ENCODE measurements at regions of chr7 and their contacts with region 1.

Region 1: DNA sequence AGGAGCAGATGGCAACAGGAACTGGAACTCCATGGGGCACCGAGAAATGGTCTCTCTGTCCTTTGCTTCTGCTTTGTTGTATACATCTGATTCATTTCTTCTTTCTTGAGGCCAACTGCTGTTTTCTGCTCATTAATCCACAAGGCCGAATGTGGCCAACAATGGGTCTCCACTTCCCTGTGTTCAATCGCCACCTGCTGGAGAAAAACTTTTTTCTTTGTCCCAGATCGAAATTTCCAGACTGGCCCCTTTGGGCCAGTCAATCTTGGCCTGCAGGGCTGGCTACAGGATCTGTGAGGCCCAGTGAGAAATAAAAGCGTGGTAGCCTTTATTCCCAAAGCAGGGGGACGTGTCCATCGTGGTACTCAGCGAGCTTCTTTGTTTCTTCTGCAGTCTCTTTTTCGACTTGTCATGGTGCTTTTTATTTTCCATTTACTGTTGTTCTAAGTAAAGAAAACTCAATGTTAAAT is 58.8 kb downstream of the PARP12 start:
- DNase-seq: no peak
- ATAC-seq: peak; percentile 49
- H3K4me3 Mint-ChIP-seq: no peak overlapping the region
- H3K27ac Mint-ChIP-seq: no peak overlapping the region
- H3K4me1 Mint-ChIP-seq: peaks cover 2% of the 10 kb centered on the region
- H3K27me3 Mint-ChIP-seq: no peaks in the 10 kb centered on the region
- CTCF ChIP-seq: no peak

Region 2: GRCh38 chr7:139016931-139017511 is 986.9 kb before region 1 on chr7:
- CTCF ChIA-PET with region 1: no interaction called
- POLR2A ChIA-PET with region 1: no interaction called
- intact Hi-C with region 1: loop called (anchors 5 kb)
- DNase-seq: no peak
- ATAC-seq: peak; percentile 71
- H3K4me3 Mint-ChIP-seq: no peak overlapping the region
- H3K27ac Mint-ChIP-seq: no peak overlapping the region
- H3K4me1 Mint-ChIP-seq: peaks cover 2% of the 10 kb centered on the region
- H3K27me3 Mint-ChIP-seq: peaks cover 9% of the 10 kb centered on the region
- CTCF ChIP-seq: no peak

Region 3: GRCh38 chr7:139505563-139505962 is 498.4 kb before region 1 on chr7:
- CTCF ChIA-PET with region 1: interaction called, 7 read pairs
- POLR2A ChIA-PET with region 1: no interaction called
- intact Hi-C with region 1: loop called (anchors 1 kb)
- DNase-seq: no peak
- ATAC-seq: no peak
- H3K4me3 Mint-ChIP-seq: no peak overlapping the region
- H3K27ac Mint-ChIP-seq: no peak overlapping the region
- H3K4me1 Mint-ChIP-seq: no peaks in the 10 kb centered on the region
- H3K27me3 Mint-ChIP-seq: peaks cover 2% of the 10 kb centered on the region
- CTCF ChIP-seq: no peak

Region 4: GRCh38 chr7:139620676-139621344 is 383.1 kb before region 1 on chr7:
- CTCF ChIA-PET with region 1: interaction called, 11 read pairs
- POLR2A ChIA-PET with region 1: no interaction called
- intact Hi-C with region 1: loop called (anchors 1 kb)
- DNase-seq: no peak
- ATAC-seq: peak; percentile 49
- H3K4me3 Mint-ChIP-seq: no peak overlapping the region
- H3K27ac Mint-ChIP-seq: no peak overlapping the region
- H3K4me1 Mint-ChIP-seq: no peaks in the 10 kb centered on the region
- H3K27me3 Mint-ChIP-seq: no peaks in the 10 kb centered on the region
- CTCF ChIP-seq: no peak

Region 5: DNA sequence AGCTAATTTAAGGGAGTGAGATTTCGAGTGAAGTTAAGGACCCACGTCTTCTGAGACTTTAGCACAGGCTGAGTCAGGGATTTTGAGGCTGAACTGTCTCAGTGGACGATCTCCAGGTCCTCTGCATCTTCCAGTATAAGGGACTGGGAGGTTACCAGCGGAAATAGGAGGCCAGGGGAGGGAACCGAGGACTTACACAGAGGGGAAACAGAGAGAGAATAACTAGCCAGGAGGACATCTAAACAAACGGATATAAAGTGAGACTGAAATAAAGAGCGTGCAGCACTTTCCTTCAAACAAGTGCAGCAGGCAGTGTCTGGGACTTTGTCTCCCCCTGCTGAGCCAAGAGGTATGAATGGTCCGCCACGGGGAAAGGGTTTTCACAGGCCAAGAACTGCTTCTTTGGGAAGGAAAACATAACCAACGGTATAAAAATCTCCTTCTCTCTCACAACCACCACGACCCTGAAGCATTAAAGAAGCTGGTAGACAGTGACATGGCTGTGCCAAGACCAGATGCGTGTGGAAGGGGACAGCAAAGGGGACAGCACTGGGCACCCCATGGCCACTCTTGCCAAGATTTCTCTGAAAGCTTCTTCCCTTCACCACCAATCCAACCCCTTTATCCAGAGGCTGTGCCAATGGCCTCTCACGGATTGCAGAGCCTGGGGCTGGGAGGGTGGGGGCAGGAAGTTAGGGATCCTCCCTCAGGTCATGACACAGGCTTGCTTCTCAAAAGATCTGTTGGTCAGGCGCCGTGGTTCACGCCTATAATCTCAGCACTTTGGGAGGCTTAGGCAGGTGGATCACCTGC is 322.4 kb after region 1 on chr7:
- CTCF ChIA-PET with region 1: no interaction called
- POLR2A ChIA-PET with region 1: no interaction called
- intact Hi-C with region 1: loop called (anchors 1 kb)
- DNase-seq: peak; percentile 21
- ATAC-seq: peak; percentile 75
- H3K4me3 Mint-ChIP-seq: no peak overlapping the region
- H3K27ac Mint-ChIP-seq: no peak overlapping the region
- H3K4me1 Mint-ChIP-seq: no peaks in the 10 kb centered on the region
- H3K27me3 Mint-ChIP-seq: no peaks in the 10 kb centered on the region
- CTCF ChIP-seq: no peak